ENCODE measurements at regions of chr12 and their contacts with region 1.

Region 1: DNA sequence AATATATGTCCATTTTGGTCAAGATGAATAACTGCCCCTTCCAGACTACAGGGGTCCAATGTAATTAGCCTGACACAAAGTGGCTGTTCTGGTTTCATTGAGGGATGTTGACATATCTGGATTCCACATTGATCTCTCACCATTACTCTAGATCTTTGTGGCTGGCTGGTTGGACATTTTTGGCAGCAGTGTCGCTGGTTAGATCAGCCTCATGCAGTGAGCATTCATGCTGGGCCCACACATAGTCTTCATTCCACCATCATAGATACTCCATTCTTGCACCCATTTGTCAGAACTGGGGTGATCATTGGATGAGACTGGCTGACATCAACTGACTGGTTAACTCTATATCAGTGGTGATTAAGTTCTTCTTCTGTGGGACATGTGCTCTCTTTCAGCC is 74.4 kb downstream of the MGST1 start:
- DNase-seq: no peak
- H3K4me3 ChIP-seq: no peak overlapping the region
- H3K27ac ChIP-seq: no peak overlapping the region
- H3K4me1 ChIP-seq: no peaks in the 10 kb centered on the region
- H3K27me3 ChIP-seq: no peaks in the 10 kb centered on the region
- CTCF ChIP-seq: no peak
- EP300 ChIP-seq: no peak
- POLR2A ChIP-seq: no peak

Region 2: GRCh38 chr12:15563663-15564062 is 858.1 kb before region 1 on chr12:
- in situ Hi-C with region 1: no loop called
- intact Hi-C with region 1: loop called (anchors 5 kb)
- DNase-seq: no peak
- H3K4me3 ChIP-seq: peak overlapping the region in 1 of 4 donors; percentile 21
- H3K27ac ChIP-seq: peak overlapping the region; percentile 18 to 58 (median 28)
- H3K4me1 ChIP-seq: peaks cover 0 to 20% (median 3%) of the 10 kb centered on the region in 4 donors
- H3K27me3 ChIP-seq: no peaks in the 10 kb centered on the region
- CTCF ChIP-seq: no peak
- EP300 ChIP-seq: no peak
- POLR2A ChIP-seq: no peak

Region 3: GRCh38 chr12:16359512-16360491 is 62.0 kb before region 1 on chr12:
- in situ Hi-C with region 1: no loop called
- intact Hi-C with region 1: no loop called
- DNase-seq: peak; percentile 64
- H3K4me3 ChIP-seq: no peak overlapping the region
- H3K27ac ChIP-seq: no peak overlapping the region
- H3K4me1 ChIP-seq: peaks cover 0 to 6% (median 2%) of the 10 kb centered on the region in 4 donors
- H3K27me3 ChIP-seq: no peaks in the 10 kb centered on the region
- CTCF ChIP-seq: peak; percentile 66 to 83 (median 75)
- EP300 ChIP-seq: no peak
- POLR2A ChIP-seq: no peak

Measured in transverse colon (tissue), 4 donors.